Activated CD4-positive, alpha-beta T cell treated with anti-CD3 and anti-CD28 coated beads, Interleukin-2, amount 10 ng/mL, durations not matched to agents 24 days and 14 days (primary cell): ENCODE measurements at regions of chr10 and their contacts with region 1.

Region 1: DNA sequence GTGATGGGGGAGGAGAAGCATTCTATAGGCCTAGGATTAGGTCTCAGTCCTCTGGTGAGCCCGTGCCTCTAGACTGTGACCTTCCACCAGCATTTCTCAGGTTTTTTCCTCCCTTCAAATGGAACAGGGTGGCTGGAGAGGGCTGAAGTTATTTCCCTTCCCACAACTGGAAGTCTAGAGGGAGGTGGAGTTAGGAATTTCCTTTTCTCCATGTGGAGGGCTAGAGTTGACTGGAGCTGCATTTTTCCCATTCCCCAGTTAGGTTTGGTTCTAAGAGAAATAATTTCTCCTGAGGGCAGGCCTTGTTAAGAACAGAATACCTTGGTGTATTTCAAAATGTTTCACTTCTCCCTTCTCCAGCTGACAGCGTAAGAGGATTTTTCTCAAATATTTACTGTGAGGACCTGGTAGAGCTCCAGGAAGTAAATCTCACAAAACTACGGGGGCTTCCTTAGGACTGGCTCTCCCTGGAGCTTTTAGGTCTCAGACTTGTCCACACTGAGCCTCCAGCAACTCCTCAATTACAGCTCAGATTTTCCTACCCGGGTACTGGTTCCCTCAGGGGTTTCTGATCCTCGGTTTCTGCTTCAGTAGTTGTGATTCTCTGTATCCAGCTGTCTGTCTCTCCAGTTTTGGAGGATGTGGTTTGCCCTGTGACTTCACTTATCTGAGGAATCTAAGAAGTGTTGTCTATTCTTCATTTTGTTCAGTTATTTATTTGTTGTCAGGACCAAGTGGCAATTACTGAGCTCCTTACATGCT is 6.0 kb upstream of the REEP3 start:
- DNase-seq: peak; percentile 74
- H3K4me3 Mint-ChIP-seq: peak overlapping the region; percentile 48
- H3K27ac Mint-ChIP-seq: peak overlapping the region; percentile 85
- H3K4me1 Mint-ChIP-seq: peaks cover 48% of the 10 kb centered on the region
- H3K27me3 Mint-ChIP-seq: no peaks in the 10 kb centered on the region

Region 2: GRCh38 chr10:63707254-63707910 is 192.2 kb after region 1 on chr10:
- intact Hi-C with region 1: loop called (anchors 2 kb)
- DNase-seq: peak; percentile 63
- H3K4me3 Mint-ChIP-seq: peak overlapping the region; percentile 32
- H3K27ac Mint-ChIP-seq: peak overlapping the region; percentile 63
- H3K4me1 Mint-ChIP-seq: peaks cover 15% of the 10 kb centered on the region
- H3K27me3 Mint-ChIP-seq: no peaks in the 10 kb centered on the region